Activated CD8-positive, alpha-beta T cell treated with anti-CD3 and anti-CD28 coated beads, Interleukin-2, amount 10 ng/mL, durations not matched to agents 7 days and 5 days (primary cell): ENCODE measurements at regions of chr6 and their contacts with region 1.

Region 1: DNA sequence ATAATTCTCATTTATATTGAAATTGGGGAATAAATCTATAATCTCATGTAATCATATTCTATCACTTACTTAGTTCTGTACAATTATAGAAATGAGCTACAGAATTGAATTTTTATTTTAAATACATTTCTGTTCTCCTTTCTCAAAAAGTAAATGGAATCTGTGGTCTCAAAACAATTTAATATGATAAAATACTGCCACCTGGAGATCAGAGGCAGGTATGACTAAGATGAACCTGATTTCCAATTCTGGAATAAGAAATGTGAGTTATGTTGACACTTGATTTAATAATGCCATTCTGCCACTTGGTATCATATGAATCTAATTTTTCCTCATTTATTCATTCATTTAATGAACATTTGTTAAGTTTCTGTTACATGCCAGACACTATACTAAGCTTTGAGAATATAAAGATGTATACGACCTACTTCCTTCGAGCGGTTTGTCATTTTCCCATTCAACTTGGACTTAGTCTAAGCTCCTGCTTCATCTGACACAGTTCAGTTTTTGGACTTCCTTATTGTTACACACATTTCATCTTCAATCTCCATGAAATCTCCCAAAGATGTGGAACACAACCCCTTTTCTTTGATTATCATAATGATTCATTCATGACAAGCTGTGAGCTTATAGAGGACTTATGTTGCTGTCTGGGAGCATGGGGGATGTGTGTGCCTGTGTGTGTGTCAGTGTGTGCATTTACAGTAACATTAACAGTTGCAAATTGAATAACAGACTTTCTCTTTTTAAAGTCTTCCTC is 7.5 kb upstream of the CCDC28A start:
- DNase-seq: no peak
- ATAC-seq: no peak
- H3K4me3 Mint-ChIP-seq: no peak overlapping the region
- H3K27ac Mint-ChIP-seq: no peak overlapping the region
- H3K4me1 Mint-ChIP-seq: no peaks in the 10 kb centered on the region
- H3K27me3 Mint-ChIP-seq: no peaks in the 10 kb centered on the region

Region 2: DNA sequence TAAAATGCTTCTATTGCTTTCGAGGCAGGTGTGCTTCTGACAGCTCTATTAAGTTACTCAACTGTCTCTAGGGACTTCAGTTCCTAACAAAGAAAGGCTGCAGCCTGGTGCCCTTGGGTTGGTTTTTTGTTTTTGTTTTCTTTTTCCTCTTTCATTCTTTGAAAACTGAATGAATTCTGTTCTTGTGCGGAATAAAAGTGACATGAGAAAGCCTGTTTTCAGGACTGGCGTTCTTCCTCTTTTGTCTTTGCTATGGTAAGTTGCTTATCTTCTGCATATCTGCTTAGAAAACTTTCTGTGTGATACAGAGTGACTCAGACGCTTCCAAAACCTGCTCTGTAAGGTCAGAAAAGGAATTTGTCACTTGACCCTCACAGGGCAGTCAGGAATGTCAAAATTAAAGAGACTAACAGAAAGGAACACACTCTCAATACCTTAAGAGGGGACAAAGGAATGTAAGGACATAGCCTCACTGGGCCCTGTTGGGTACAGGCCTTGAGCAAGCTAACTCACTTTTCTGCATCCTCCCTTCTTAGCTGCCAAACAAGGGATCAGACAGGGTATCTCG is 210.6 kb before region 1 on chr6:
- CTCF ChIA-PET with region 1: no interaction called
- POLR2A ChIA-PET with region 1: no interaction called
- DNase-seq: no peak
- ATAC-seq: no peak
- H3K4me3 Mint-ChIP-seq: no peak overlapping the region
- H3K27ac Mint-ChIP-seq: no peak overlapping the region
- H3K4me1 Mint-ChIP-seq: no peaks in the 10 kb centered on the region
- H3K27me3 Mint-ChIP-seq: peaks cover 21% of the 10 kb centered on the region

Region 3: GRCh38 chr6:138588805-138589434 is 177.2 kb before region 1 on chr6:
- CTCF ChIA-PET with region 1: interaction called, 79 read pairs
- POLR2A ChIA-PET with region 1: interaction called, 3 read pairs
- DNase-seq: peak; percentile 71
- ATAC-seq: peak; percentile 63
- H3K4me3 Mint-ChIP-seq: no peak overlapping the region
- H3K27ac Mint-ChIP-seq: peak overlapping the region; percentile 47
- H3K4me1 Mint-ChIP-seq: peaks cover 36% of the 10 kb centered on the region
- H3K27me3 Mint-ChIP-seq: peaks cover 2% of the 10 kb centered on the region

Region 4: DNA sequence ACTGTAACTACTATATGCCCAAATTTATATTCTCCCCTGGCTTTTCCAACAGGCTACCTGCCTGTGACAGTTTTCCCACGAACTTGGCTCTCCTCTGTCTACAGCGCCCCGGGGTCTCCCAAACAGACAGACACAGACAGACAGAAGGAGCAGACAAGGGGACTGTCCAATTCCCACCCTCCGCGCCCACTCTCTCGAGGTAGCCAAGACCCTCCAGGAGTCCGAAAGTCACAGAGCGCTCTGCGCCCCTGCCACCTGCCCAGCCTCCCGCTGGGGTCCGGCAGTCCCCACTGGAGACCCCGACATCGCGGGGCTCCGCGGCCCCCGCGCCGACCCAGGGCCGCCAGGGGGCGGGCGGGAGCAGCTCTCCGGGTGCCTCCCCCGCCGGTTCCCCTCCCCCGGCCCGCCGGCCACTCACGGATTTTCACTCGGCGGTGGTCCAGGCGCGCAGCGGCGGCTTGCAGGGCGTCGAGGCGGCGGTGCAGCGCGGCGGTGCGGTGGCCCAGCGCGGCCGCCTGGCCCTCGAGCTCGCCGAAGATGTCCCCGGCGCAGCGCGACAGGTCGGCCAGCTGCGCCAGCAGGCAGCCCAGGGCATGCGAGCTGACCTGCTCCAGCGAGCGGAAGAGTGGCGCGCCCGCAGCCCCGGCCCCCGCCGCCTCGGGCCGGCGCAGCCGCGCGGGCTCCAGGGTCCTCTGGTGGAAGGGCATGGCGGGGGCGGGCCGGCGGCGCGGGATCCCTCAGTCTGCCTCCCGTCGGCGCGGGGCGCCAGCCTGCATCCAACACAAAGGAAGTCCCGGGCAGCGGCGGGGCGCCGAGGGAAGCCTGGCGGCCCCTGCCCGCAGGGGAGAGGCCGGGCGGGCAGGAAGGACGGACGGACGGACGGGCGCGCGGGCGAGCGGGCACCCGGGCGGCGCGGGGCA is 73.8 kb before region 1 on chr6:
- CTCF ChIA-PET with region 1: interaction called, 26 read pairs
- POLR2A ChIA-PET with region 1: no interaction called
- DNase-seq: peak; percentile 62
- ATAC-seq: peak; percentile 73
- H3K4me3 Mint-ChIP-seq: peak overlapping the region; percentile 58
- H3K27ac Mint-ChIP-seq: no peak overlapping the region
- H3K4me1 Mint-ChIP-seq: peaks cover 7% of the 10 kb centered on the region
- H3K27me3 Mint-ChIP-seq: peaks cover 36% of the 10 kb centered on the region